ENCODE measurements at regions of chr10 and their contacts with region 1.

Region 1: DNA sequence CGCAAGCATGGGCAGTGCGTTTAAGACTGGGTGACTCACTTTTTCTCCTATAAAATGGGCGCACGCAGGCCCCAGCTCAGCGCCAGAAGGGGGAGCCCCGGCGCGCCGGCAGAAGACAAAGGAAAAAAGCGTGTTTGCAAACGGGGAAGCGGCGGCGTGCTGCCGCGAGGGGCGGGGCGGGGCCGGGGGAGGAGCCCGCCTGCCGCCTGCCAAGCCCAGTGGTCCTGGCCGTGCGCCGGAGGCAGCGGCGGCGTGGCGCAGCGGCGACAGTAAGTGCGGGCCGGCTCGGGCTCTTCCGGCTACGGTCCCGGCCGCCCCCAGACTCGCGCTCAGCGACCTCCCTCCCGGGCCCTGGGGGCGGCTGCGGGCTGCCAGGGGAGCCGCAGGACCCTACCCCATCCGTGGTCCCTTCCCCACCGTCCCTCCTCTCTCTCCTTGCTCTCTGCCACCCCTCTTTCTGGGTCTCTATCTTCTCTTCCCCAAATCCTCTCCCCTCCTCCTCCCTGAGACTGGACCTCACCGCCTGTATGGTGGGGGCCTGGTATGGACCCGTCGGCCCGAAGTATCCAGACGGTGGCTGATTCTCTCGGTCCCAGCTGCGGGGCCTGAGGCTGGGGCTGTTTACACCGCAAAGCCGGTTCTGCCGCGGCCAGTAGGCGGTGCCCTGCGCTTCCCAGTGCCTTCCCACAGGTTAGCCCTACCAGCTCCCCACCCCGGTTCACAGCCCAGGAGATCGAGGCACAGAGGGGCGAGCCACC is at the start of gene SLC29A3:
- DNase-seq: peak; percentile 91
- H3K4me3 ChIP-seq: peak within 1 kb of the TSS; percentile 71
- H3K4me3 Mint-ChIP-seq: peak within 1 kb of the TSS; percentile 93
- H3K27ac Mint-ChIP-seq: peak within 1 kb of the TSS; percentile 56
- H3K4me1 ChIP-seq: peaks cover 22% of the 10 kb centered on the region
- H3K4me1 Mint-ChIP-seq: peaks cover 7% of the 10 kb centered on the region
- H3K27me3 ChIP-seq: no peaks in the 10 kb centered on the region
- H3K27me3 Mint-ChIP-seq: no peaks in the 10 kb centered on the region
- CTCF ChIP-seq: peak; percentile 83 to 95
- total RNA-seq, gene SLC29A3: 18.3 and 20.7 TPM in 2 replicates

Region 2: DNA sequence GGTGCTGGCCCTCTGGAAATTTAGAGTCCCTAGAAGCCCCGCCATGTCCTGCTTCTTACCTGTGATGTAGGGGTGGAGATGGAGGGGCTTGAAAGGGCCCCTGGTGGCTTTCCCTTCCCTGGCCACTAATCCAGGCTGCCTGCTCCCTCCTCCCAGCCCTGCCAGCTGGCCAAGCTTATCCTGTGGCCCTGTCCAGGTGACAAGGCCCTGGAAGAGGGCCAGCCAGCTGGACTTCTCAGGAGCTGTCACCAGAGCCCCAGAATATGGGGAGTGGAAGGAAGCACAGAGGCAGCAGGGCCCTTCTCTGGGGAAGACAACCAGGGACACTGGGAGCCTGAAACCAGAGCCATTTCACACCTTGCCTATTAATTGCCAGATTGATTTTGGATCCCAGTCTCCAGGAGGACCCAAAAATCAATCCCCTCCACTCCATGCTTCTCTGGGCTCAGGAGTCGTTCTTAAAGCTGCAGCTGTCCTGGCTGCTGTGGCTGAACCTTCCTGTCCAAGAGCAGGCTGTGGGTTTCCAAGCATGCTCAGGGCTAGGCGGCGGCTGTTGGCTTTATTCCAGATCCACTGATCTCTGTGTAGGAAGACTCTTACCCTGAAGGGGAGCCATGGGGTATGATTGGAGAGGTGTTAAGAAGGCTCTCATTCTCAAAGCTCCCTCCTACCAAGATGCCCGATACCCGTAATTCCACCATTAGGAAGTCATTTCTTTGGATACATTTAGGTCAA is 378.2 kb before region 1 on chr10:
- CTCF ChIA-PET with region 1: no interaction called
- POLR2A ChIA-PET with region 1: no interaction called
- intact Hi-C with region 1: no loop called
- DNase-seq: no peak
- H3K4me3 ChIP-seq: no peak overlapping the region
- H3K4me3 Mint-ChIP-seq: no peak overlapping the region
- H3K27ac Mint-ChIP-seq: no peak overlapping the region
- H3K4me1 ChIP-seq: no peaks in the 10 kb centered on the region
- H3K4me1 Mint-ChIP-seq: no peaks in the 10 kb centered on the region
- H3K27me3 ChIP-seq: no peaks in the 10 kb centered on the region; the same call in 1 of the 2 replicates
- H3K27me3 Mint-ChIP-seq: peaks cover 14% of the 10 kb centered on the region
- CTCF ChIP-seq: no peak

Region 3: GRCh38 chr10:71085689-71086438 is 233.4 kb before region 1 on chr10:
- CTCF ChIA-PET with region 1: no interaction called
- POLR2A ChIA-PET with region 1: no interaction called
- intact Hi-C with region 1: no loop called
- DNase-seq: peak in 1 of 2 experiments; percentile 32
- H3K4me3 ChIP-seq: no peak overlapping the region
- H3K4me3 Mint-ChIP-seq: no peak overlapping the region
- H3K27ac Mint-ChIP-seq: no peak overlapping the region
- H3K4me1 ChIP-seq: no peaks in the 10 kb centered on the region
- H3K4me1 Mint-ChIP-seq: no peaks in the 10 kb centered on the region
- H3K27me3 ChIP-seq: no peaks in the 10 kb centered on the region
- H3K27me3 Mint-ChIP-seq: peaks cover 13% of the 10 kb centered on the region
- CTCF ChIP-seq: no peak

Region 4: DNA sequence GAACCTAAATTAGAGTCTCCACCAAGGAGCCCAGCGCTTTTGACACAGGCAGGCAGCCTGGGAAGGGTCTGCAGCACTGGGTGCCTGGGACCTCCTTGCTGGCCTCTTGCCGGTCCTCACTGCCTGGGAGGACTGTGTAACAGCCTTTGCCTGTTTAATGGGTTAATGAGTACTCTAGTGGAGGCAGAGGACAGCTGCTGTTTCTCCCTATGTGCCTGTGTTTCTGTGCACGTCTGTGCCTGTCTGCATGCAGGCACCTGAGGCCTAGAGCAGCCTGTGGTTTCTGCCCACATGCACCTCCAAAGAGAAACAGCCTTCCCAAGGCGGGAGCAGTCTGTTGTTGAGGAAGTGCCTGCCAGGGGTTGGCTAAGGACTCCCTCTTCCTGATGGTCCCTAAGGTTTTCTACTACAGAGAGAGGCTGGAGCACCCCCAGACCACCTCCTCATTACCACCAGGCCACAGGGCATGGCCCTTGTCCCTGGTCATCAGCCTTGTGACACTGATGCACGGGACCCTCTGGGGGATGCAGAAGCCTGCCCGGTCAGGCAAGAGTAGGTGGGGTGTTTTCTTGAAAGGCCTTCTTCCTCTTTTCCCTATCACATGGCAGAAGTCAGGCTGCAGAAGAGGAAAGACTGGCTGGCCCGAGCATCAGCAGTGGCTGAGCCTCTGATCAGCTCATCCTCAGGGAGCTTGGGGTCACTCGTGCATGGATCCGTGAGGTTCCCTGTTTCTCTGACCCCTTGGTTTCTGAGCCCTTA is 14.1 kb after region 1 on chr10:
- CTCF ChIA-PET with region 1: interaction called, 38 read pairs
- POLR2A ChIA-PET with region 1: no interaction called
- intact Hi-C with region 1: no loop called
- DNase-seq: no peak
- H3K4me3 ChIP-seq: no peak overlapping the region
- H3K4me3 Mint-ChIP-seq: no peak overlapping the region
- H3K27ac Mint-ChIP-seq: peak overlapping the region; percentile 45
- H3K4me1 ChIP-seq: peaks cover 52% of the 10 kb centered on the region
- H3K4me1 Mint-ChIP-seq: peaks cover 36% of the 10 kb centered on the region
- H3K27me3 ChIP-seq: no peaks in the 10 kb centered on the region
- H3K27me3 Mint-ChIP-seq: no peaks in the 10 kb centered on the region
- CTCF ChIP-seq: no peak

Region 5: DNA sequence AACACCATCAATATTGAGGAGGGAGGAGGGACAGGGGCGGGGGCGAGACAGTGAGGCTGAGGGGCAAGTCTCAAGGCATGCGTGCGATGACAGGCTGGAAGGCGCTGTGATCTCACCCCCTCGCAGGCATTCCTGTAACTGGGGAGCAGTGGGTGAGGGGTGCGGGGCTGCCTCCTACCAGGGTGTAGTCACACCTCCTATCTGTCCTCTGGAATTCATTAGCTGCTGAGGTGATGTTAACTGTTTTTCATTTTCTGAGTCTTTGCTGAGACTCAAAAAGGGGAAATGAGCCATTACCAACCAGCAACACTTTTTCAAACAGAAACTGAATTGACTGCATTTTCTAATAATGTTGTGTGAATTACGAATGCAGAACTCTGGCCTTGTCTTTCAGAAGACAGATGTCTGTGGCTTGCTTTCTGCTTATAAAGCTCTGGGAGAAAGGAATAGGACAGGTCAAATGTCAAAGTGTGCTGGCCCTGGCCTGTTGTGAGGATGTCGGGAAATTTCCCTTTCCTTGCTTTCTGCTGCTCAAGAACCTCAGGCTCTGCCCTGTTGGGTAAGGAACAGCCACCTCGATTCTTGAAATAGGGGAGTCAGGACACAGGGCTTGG is 53.8 kb after region 1 on chr10:
- CTCF ChIA-PET with region 1: interaction called, 50 read pairs
- POLR2A ChIA-PET with region 1: interaction called, 11 read pairs
- intact Hi-C with region 1: loop called (anchors 1 kb)
- DNase-seq: no peak
- H3K4me3 ChIP-seq: no peak overlapping the region
- H3K4me3 Mint-ChIP-seq: no peak overlapping the region
- H3K27ac Mint-ChIP-seq: no peak overlapping the region
- H3K4me1 ChIP-seq: peaks cover 12% of the 10 kb centered on the region; the same call in 1 of the 2 replicates
- H3K4me1 Mint-ChIP-seq: peaks cover 14% of the 10 kb centered on the region
- H3K27me3 ChIP-seq: no peaks in the 10 kb centered on the region
- H3K27me3 Mint-ChIP-seq: peaks cover 3% of the 10 kb centered on the region
- CTCF ChIP-seq: no peak

Region 6: GRCh38 chr10:71396084-71396720 is 77.0 kb after region 1 on chr10:
- CTCF ChIA-PET with region 1: interaction called, 18 read pairs
- POLR2A ChIA-PET with region 1: no interaction called
- intact Hi-C with region 1: no loop called
- DNase-seq: peak in 1 of 2 experiments; percentile 59
- H3K4me3 ChIP-seq: peak overlapping the region; percentile 36
- H3K4me3 Mint-ChIP-seq: peak overlapping the region; percentile 60
- H3K27ac Mint-ChIP-seq: no peak overlapping the region
- H3K4me1 ChIP-seq: peaks cover 18% of the 10 kb centered on the region
- H3K4me1 Mint-ChIP-seq: no peaks in the 10 kb centered on the region
- H3K27me3 ChIP-seq: peaks cover 4% of the 10 kb centered on the region
- H3K27me3 Mint-ChIP-seq: peaks cover 32% of the 10 kb centered on the region
- CTCF ChIP-seq: peak; percentile 23 to 50

Region 7: DNA sequence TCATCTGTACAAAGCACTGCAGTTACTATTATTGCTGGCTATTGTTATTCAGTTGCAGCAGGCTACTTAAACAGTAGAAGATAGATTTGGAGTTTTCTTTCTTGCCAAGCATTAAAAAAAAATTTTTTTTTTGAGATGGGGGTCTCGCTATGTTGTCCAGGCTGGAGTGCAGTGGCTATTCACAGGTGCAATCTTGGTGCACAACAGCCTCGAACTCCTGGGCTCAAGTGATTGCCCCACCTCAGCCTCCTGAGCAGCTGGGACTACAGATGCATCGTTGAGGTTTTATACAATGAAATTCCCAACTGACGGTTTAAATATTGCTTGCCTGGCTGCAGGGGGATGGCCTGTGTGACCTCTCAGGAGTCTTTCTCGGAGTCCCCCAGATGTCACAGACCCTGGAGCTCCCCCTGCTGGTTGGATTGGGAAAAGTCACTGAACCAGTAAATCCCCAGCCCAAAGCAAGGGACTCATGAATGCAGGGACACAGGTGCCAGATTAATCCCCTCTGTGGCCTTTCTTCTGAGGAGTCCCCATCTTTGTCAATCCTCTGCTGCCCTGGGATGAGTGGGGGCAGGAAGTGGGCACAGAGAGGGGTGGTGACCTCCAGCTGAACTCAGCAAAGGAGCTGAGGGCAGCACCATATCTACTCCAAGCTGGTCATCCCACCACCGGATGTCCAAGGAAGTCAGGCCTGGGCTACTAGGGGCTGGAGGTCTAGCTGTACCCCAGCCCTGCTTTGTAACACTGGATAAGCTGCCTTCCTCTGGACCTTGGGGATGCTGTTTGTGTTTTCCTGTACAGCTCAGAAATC is 250.8 kb after region 1 on chr10:
- CTCF ChIA-PET with region 1: interaction called, 18 read pairs
- POLR2A ChIA-PET with region 1: no interaction called
- intact Hi-C with region 1: loop called (anchors 1 kb)
- DNase-seq: peak; percentile 79 to 88
- H3K4me3 ChIP-seq: no peak overlapping the region
- H3K4me3 Mint-ChIP-seq: no peak overlapping the region
- H3K27ac Mint-ChIP-seq: no peak overlapping the region
- H3K4me1 ChIP-seq: no peaks in the 10 kb centered on the region
- H3K4me1 Mint-ChIP-seq: no peaks in the 10 kb centered on the region
- H3K27me3 ChIP-seq: no peaks in the 10 kb centered on the region
- H3K27me3 Mint-ChIP-seq: peaks cover 5% of the 10 kb centered on the region
- CTCF ChIP-seq: peak; percentile 94 to 95

Region 8: GRCh38 chr10:71708301-71708703 is 389.1 kb after region 1 on chr10:
- CTCF ChIA-PET with region 1: interaction called, 20 read pairs
- POLR2A ChIA-PET with region 1: no interaction called
- intact Hi-C with region 1: loop called (anchors 1 kb)
- DNase-seq: peak; percentile 76 to 88
- H3K4me3 ChIP-seq: no peak overlapping the region
- H3K4me3 Mint-ChIP-seq: no peak overlapping the region
- H3K27ac Mint-ChIP-seq: peak overlapping the region; percentile 2
- H3K4me1 ChIP-seq: 0 out of 2 replicates have a peak, but pooled peaks cover under 1% of the 10 kb centered on the region
- H3K4me1 Mint-ChIP-seq: no peaks in the 10 kb centered on the region
- H3K27me3 ChIP-seq: no peaks in the 10 kb centered on the region
- H3K27me3 Mint-ChIP-seq: no peaks in the 10 kb centered on the region
- CTCF ChIP-seq: peak; percentile 97 to 98